OCI-LY7 (cell line): ENCODE measurements at regions of chr2 and their contacts with region 1.

Region 1: GRCh38 chr2:4635289-4635688 is 931.9 kb downstream of the DCDC2C start:
- DNase-seq: no peak
- H3K4me3 ChIP-seq: no peak overlapping the region
- H3K27ac ChIP-seq: no peak overlapping the region
- H3K4me1 ChIP-seq: no peaks in the 10 kb centered on the region
- CTCF ChIP-seq: no peak

Region 2: GRCh38 chr2:4693266-4693812 is 58.0 kb after region 1 on chr2:
- CTCF ChIA-PET with region 1: no interaction called
- POLR2A ChIA-PET with region 1: no interaction called
- intact Hi-C with region 1: loop called (anchors 5 kb)
- DNase-seq: no peak
- H3K4me3 ChIP-seq: no peak overlapping the region
- H3K27ac ChIP-seq: no peak overlapping the region
- H3K4me1 ChIP-seq: no peaks in the 10 kb centered on the region
- CTCF ChIP-seq: no peak